ENCODE measurements at regions of chr11 and their contacts with region 1.

Region 1: DNA sequence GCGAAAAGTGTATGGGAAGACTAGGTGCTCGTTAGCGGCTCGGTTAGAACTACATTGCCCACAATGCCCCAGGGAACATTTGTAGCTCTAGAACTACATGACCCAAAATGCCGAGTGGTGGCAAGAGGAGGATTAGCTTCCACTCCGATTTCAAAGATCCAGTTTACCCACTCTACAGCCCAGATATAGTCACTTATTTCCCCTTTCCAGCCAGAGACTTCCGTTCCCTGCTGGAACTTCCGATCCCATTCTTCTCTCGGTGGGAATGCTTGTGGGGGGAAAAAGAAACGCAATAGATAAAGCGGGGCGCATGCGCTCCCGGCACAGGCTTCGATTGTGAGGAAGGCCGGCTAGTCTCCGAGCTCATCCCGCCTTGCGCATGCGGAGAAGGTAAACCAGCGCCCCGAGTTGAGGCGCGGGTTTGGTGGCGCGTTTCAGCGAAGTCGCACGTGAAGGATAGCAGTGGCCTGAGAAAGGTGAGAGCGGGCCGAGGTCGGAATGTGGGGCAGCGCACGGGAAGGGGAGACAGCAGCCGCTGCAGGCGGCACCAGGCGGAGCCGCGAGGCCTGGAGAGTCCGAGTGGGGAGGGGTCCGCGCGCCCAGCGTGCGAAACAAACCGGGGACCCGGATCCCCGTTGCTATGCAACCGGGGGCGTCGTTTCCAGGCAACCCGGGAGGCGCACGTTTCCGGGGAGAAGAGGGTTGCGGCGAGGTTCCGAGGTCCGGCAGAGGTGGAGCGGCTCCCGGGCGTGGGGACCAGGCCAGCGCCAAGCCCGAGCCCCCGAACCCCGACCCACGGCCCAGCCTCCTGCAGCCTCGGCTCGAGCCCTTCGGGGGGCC is at the start of gene TMEM109:
- DNase-seq: peak; percentile 86 to 87
- H3K4me3 ChIP-seq: peak within 1 kb of the TSS; percentile 11 to 82 (median 21)
- H3K27ac ChIP-seq: peak within 1 kb of the TSS; percentile 73 to 93 (median 86)
- H3K4me1 ChIP-seq: peaks cover 24 to 41% of the 10 kb centered on the region in 2 donors
- H3K27me3 ChIP-seq: no peaks in the 10 kb centered on the region
- CTCF ChIP-seq: peak in 2 of 6 experiments; percentile 9 to 34
- POLR2A ChIP-seq: peak in 1 of 2 donors; percentile 74
- total RNA-seq, gene TMEM109: 61.9 to 105 (median 96.0) TPM

Region 2: GRCh38 chr11:61161190-61162091 is 247.4 kb after region 1 on chr11 and contains the start of gene VPS37C:
- intact Hi-C with region 1: loop called (anchors 10 kb)
- DNase-seq: peak; percentile 84 to 87
- H3K4me3 ChIP-seq: peak within 1 kb of the TSS; percentile 21 to 89 (median 62)
- H3K27ac ChIP-seq: peak within 1 kb of the TSS; percentile 94 to 98 (median 96)
- H3K4me1 ChIP-seq: peaks cover 22 to 33% of the 10 kb centered on the region in 2 donors
- H3K27me3 ChIP-seq: no peaks in the 10 kb centered on the region
- CTCF ChIP-seq: peak in 2 of 6 experiments; percentile 7 to 29
- POLR2A ChIP-seq: peak in 1 of 2 donors; percentile 79
- total RNA-seq, gene VPS37C: 13.0 to 18.2 (median 15.9) TPM

Region 3: GRCh38 chr11:61187505-61188130 is 273.6 kb after region 1 on chr11:
- intact Hi-C with region 1: no loop called
- DNase-seq: peak; percentile 83 to 85
- H3K4me3 ChIP-seq: no peak overlapping the region
- H3K27ac ChIP-seq: no peak overlapping the region
- H3K4me1 ChIP-seq: peaks cover 0 to under 1% of the 10 kb centered on the region in 2 donors
- H3K27me3 ChIP-seq: no peaks in the 10 kb centered on the region
- CTCF ChIP-seq: peak; percentile 80 to 94 (median 90)
- POLR2A ChIP-seq: no peak

Measured in thyroid gland (tissue), 4 donors.